ENCODE measurements at regions of chr3 and their contacts with region 1.

Region 1: DNA sequence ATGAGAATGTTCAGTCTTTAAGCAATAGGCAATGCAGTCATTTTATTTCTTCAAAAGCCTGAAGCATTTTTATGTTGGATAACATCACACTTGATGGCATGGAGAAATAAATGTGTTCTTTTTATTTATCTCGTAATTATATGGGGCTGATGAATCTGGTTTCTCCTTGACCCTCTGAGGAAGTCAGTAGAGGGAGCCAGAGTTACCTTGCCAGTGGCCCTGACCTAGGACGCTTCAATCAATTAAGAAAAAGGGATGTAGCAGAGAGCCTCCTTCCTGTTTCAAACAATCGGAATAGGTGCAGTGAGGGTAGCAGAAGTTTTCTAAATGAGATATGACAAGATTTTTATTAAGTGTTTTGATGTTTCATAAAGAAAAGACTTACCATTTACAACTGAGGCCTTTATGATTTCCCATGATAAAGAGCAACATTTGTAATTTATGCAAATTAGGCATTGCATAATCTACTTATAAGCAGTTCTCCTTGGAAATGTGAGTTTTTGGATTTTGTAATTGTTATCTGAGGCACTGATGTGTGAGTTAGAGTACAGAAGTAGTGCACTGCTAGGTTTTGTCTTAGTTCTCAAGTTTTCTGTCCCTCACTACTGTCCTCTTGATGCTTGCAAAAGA is 129.1 kb downstream of the RAP2B start:
- DNase-seq: peak in 2 of 9 experiments; percentile 44 to 57
- ATAC-seq: no peak
- H3K4me3 ChIP-seq: no peak overlapping the region
- H3K4me3 Mint-ChIP-seq: no peak overlapping the region
- H3K27ac ChIP-seq: no peak overlapping the region
- H3K27ac Mint-ChIP-seq: no peak overlapping the region
- H3K4me1 ChIP-seq: peaks cover 11% of the 10 kb centered on the region
- H3K4me1 Mint-ChIP-seq: peaks cover 38% of the 10 kb centered on the region
- H3K27me3 ChIP-seq: no peaks in the 10 kb centered on the region
- H3K27me3 Mint-ChIP-seq: no peaks in the 10 kb centered on the region
- CTCF ChIP-seq: no peak

Region 2: DNA sequence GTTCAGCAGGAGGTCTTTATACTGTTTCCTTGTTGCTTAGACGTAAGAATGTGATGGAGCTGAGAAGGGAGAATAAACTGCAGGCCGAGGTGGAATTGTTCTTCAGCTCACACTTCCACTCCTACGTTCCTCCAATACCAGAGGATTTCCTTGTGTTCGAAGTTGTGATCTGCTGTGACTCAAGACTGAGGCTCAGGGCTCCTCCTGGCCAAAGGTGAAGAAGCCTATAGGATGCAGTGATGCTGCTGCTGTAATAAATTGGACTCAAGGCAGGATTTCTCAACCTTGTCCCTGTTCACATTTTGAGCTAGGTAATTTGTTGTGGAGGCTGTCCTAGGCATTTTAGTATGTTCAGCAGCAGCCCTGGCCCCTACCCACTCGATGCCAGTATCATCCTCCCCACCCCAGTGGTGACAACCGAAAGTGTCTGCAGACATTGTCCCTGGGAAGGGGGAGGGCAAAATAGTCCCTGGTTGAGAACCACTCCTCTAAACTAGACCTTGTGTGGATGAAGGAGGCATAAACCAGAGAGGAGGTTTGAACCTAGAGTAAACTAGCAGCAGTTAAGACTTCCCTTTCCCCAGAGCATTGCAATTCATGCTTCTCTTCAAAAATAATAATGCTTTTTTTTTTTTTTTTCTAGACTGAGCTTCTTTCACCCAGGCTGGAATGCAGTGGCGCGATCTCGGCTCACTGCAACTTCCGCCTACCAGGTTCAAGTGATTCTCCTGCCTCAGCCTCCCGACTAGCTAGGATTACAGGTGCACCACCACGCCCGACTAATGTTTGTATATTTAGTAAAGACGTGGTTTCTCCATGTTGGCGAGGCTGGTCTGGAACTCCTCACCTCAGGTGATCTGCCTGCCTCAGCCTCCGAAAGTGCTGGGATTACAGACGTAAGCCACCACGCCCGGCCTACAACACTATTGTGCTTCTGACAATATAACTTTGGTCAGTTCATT is 118.1 kb before region 1 on chr3:
- CTCF ChIA-PET with region 1: interaction called, 109 read pairs
- POLR2A ChIA-PET with region 1: no interaction called
- intact Hi-C with region 1: no loop called
- DNase-seq: no peak
- ATAC-seq: no peak
- H3K4me3 ChIP-seq: no peak overlapping the region
- H3K4me3 Mint-ChIP-seq: no peak overlapping the region
- H3K27ac ChIP-seq: no peak overlapping the region
- H3K27ac Mint-ChIP-seq: peak overlapping the region; percentile 68
- H3K4me1 ChIP-seq: peaks cover 2% of the 10 kb centered on the region
- H3K4me1 Mint-ChIP-seq: peaks cover 31% of the 10 kb centered on the region
- H3K27me3 ChIP-seq: no peaks in the 10 kb centered on the region
- H3K27me3 Mint-ChIP-seq: no peaks in the 10 kb centered on the region
- CTCF ChIP-seq: no peak

Region 3: DNA sequence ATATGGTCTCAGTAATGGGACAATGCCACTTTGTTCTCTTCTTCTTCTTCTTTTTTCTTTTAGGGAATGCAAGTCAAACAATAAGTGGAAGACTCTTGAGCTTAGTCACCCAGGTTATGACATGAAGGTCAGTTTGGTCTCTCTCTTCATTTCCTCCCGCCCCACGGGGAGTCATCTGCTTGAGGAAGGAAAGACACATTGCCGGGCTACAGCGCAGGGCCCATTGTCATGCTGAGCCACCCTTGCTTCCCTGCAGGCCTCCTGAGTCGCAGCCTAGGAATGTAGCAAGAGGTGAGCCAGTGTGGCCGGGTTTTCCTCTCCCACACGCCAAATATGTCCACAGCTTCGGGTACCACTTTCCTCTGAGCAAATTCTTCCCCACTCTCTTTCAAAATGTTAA is 81.6 kb before region 1 on chr3:
- CTCF ChIA-PET with region 1: interaction called, 40 read pairs
- POLR2A ChIA-PET with region 1: interaction called, 4 read pairs
- intact Hi-C with region 1: loop called (anchors 1 to 5 kb)
- DNase-seq: peak in 1 of 9 experiments; percentile 43
- ATAC-seq: no peak
- H3K4me3 ChIP-seq: no peak overlapping the region
- H3K4me3 Mint-ChIP-seq: peak overlapping the region; percentile 50
- H3K27ac ChIP-seq: no peak overlapping the region
- H3K27ac Mint-ChIP-seq: no peak overlapping the region
- H3K4me1 ChIP-seq: peaks cover 13% of the 10 kb centered on the region
- H3K4me1 Mint-ChIP-seq: peaks cover 36% of the 10 kb centered on the region
- H3K27me3 ChIP-seq: no peaks in the 10 kb centered on the region
- H3K27me3 Mint-ChIP-seq: no peaks in the 10 kb centered on the region
- CTCF ChIP-seq: no peak

Region 4: GRCh38 chr3:153319705-153320554 is 28.8 kb after region 1 on chr3:
- CTCF ChIA-PET with region 1: no interaction called
- POLR2A ChIA-PET with region 1: no interaction called
- intact Hi-C with region 1: no loop called
- DNase-seq: no peak
- ATAC-seq: no peak
- H3K4me3 ChIP-seq: peak overlapping the region in 1 of 2 experiments; percentile 1
- H3K4me3 Mint-ChIP-seq: no peak overlapping the region
- H3K27ac ChIP-seq: no peak overlapping the region
- H3K27ac Mint-ChIP-seq: no peak overlapping the region
- H3K4me1 ChIP-seq: no peaks in the 10 kb centered on the region
- H3K4me1 Mint-ChIP-seq: peaks cover 5% of the 10 kb centered on the region
- H3K27me3 ChIP-seq: no peaks in the 10 kb centered on the region
- H3K27me3 Mint-ChIP-seq: peaks cover under 1% of the 10 kb centered on the region
- CTCF ChIP-seq: no peak

Region 5: GRCh38 chr3:153595186-153595815 is 304.1 kb after region 1 on chr3:
- CTCF ChIA-PET with region 1: interaction called, 3 read pairs
- POLR2A ChIA-PET with region 1: no interaction called
- intact Hi-C with region 1: loop called in 1 of 2 experiments (anchors 2 kb)
- DNase-seq: peak in 2 of 9 experiments; percentile 38 to 49
- ATAC-seq: no peak
- H3K4me3 ChIP-seq: no peak overlapping the region
- H3K4me3 Mint-ChIP-seq: no peak overlapping the region
- H3K27ac ChIP-seq: no peak overlapping the region
- H3K27ac Mint-ChIP-seq: no peak overlapping the region
- H3K4me1 ChIP-seq: no peaks in the 10 kb centered on the region
- H3K4me1 Mint-ChIP-seq: peaks cover 6% of the 10 kb centered on the region
- H3K27me3 ChIP-seq: no peaks in the 10 kb centered on the region
- H3K27me3 Mint-ChIP-seq: no peaks in the 10 kb centered on the region
- CTCF ChIP-seq: peak; percentile 48

Measured in CD8-positive, alpha-beta T cell (primary cell).